ENCODE measurements at regions of chr12 and their contacts with region 1.

Region 1: GRCh38 chr12:93219947-93220346 is 157.8 kb upstream of the NUDT4 start:
- DNase-seq: no peak
- H3K4me3 ChIP-seq: no peak overlapping the region
- H3K27ac ChIP-seq: no peak overlapping the region
- H3K4me1 ChIP-seq: peaks cover 7% of the 10 kb centered on the region
- H3K27me3 ChIP-seq: no peaks in the 10 kb centered on the region
- CTCF ChIP-seq: no peak

Region 2: DNA sequence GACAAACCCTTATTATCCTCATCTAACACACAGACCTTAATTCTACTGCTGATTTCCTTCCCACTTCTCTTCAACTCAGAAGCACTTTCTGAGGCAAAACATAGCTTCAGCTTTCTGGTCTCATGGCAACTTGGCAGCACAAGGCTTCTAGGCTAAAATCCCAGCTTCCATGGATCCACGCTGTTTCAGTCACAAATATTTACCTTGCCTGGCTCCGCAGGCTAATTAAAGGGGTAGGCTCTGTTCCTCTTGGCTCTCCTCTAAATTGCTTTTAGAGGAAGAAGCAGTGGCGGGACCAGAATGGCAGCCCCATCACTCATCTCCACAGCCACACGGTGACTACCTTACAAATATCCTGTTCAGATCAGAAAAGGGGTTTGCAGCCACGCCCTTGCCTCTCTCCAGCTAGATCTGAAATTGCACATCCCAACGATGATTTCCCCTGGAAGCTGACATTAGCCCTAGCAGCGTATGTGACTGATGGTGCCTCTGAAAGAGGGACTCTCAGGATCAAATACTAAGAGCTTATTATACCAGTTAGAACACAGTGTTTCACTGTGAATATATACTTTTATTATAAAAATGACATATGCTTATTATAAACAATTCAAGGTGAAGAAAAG is 63.7 kb before region 1 on chr12:
- CTCF ChIA-PET with region 1: no interaction called
- dilution Hi-C with region 1: loop called (anchors 5 kb)
- in situ Hi-C with region 1: no loop called
- intact Hi-C with region 1: no loop called
- DNase-seq: no peak
- H3K4me3 ChIP-seq: no peak overlapping the region
- H3K27ac ChIP-seq: no peak overlapping the region
- H3K4me1 ChIP-seq: no peaks in the 10 kb centered on the region
- H3K27me3 ChIP-seq: no peaks in the 10 kb centered on the region
- CTCF ChIP-seq: no peak

Measured in mammary epithelial cell (primary cell).